ENCODE measurements at regions of chr7 and their contacts with region 1.

Region 1: DNA sequence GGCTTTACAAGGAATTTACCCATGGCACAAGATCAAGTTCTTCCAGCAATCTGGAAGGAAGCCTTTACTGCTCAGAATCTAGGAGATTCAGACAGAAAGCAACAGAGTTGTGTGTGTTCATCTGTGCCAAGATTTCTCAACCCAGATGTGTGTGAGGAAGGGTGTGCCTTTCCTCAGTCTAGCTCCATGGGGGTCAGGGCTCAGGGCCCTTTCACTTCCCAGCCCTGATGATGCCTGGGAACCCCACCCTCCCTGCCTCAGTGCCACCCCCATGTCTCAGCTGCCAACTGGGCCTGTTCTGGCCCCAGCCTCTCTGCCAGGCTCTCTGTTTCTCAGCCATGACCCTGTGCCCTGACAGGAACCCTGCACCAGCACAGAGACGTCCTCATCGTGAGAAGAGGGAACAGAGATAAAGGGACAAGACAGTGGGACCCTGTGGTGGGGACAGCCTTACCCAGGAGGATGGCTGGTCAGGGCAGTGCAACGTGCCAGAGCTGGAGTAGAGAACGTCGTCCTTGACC is 102.0 kb downstream of the VIPR2 start:
- DNase-seq: no peak
- ATAC-seq: peak; percentile 61
- H3K4me3 ChIP-seq: no peak overlapping the region
- H3K27ac ChIP-seq: peak overlapping the region in 1 of 2 donors; percentile 1
- H3K4me1 ChIP-seq: no peaks in the 10 kb centered on the region
- H3K27me3 ChIP-seq: no peaks in the 10 kb centered on the region

Region 2: DNA sequence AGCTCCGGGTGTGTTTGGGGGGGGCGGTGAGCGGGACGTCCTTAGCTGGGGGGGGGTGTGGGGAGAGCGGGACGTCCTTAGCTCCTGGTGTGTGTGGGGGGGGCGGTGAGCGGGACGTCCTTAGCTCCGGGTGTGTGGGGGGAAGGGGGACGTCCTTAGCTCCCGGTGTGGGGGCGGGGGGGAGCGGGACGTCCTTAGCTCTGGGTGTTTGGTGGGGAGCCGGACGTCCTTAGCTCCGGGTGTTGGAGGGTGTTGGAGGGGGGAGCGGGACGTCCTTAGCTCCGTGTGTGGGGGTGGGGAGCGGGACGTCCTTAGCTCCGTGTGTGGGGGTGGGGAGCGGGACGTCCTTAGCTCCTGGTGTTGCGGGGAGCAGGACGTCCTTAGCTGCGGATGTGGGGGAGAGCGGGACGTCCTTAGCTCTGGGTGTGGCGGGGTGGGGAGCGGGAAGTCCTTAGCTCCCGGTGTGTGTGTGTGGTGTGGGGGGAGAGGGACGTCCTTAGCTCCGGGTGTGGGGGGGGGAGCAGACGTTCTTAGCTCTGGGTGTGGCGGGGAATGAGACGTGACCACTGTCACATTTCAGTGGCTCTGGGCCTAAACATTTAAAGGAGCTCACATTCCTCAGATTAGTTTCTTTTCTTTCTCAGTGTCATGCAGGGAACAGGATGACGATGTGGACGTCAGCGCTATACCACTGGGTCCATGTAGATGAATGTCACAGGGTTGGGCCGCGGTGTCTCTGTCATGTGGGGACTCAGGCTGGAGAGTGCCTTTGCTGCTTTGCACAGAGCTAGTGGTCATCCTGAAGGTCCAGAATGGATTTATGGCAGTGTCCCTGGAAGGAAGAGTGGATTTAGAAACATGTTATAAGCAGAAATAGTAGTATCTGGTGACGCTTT is 178.8 kb before region 1 on chr7:
- intact Hi-C with region 1: no loop called
- DNase-seq: peak; percentile 86
- ATAC-seq: peak; percentile 87
- H3K4me3 ChIP-seq: peak overlapping the region; percentile 47 to 50
- H3K27ac ChIP-seq: peak overlapping the region in 1 of 2 donors; percentile 51
- H3K4me1 ChIP-seq: no peaks in the 10 kb centered on the region
- H3K27me3 ChIP-seq: no peaks in the 10 kb centered on the region

Region 3: DNA sequence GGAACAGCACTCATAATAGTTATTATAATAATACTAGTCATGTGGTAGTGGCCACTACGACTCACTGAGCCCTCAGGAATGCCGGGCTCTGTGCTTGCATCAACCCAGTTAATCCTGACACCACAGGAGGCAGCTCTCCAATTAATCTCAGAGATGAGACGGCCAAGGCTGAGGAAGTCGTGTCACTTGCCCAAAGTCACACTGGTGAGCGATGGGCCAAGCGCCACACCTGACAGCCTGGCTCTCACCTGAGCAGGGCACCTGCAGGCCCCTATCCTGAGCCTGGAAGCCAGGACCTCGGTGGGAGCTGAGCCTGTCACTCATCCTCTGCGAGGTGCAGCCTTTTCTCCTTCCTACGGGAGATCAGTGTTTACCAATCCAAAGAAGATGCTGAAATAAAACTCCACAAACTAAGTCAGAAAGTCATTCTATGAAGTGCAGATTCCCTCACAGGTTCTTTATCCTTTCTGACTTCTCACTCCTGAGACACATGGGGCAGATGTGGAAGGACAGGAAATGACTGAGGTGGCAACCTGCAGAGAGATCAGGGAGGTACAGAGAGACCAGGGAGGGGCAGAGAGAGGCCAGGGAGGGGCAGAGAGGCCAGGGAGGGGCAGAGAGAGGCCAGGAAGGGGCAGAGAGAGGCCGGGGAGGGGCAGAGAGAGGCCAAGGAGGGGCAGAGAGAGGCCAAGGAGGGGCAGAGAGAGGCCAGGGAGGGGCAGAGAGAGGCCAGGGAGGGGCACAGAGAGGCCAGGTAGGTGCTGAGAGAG is 63.4 kb after region 1 on chr7:
- intact Hi-C with region 1: loop called in 1 of 2 experiments (anchors 5 kb)
- DNase-seq: peak; percentile 40 to 60
- ATAC-seq: no peak
- H3K4me3 ChIP-seq: no peak overlapping the region
- H3K27ac ChIP-seq: peak overlapping the region in 1 of 2 donors; percentile 10
- H3K4me1 ChIP-seq: no peaks in the 10 kb centered on the region
- H3K27me3 ChIP-seq: no peaks in the 10 kb centered on the region